PC-9 (cell line): ENCODE measurements at regions of chr3 and their contacts with region 1.

Region 1: DNA sequence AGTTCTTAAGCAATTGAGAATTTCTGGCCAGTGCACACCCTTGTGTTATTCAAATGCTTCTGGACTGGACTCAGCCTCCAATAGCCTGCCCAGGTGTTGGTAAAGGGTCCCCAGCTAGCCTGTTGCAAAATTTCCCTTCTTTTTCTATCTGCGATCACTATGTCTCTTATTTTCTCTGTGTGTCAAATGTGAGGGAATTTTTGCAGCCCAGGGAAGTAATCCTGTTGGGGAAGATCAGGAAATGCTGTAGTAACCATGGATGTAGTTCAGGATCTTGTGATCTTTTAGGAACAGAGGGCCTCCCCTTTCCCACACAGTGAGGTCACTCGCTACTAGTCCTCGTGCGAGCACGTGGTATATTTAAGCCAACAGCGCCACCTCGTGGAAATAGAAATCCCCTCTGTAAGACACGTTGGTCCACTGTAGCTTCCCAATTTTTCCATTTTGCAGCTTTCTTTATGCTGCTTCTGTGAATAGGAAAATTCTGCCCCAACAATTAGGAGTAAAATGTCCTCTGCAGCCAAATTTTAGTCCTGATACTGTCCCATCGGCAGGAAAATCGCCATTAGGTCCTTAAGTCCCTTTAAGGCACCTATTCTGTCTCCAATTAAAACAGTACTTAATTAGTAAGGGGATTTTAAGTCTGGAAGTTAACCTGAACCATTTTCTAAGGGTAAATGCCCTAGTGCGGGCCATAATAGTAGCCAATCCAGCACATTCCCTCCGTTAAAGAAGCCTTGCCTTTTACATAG is 4.0 kb upstream of the SMCO1 start:
- DNase-seq: peak; percentile 70 to 75
- H3K4me3 ChIP-seq: no peak overlapping the region
- H3K27ac ChIP-seq: no peak overlapping the region
- H3K4me1 ChIP-seq: peaks cover 8% of the 10 kb centered on the region
- H3K27me3 ChIP-seq: no peaks in the 10 kb centered on the region
- CTCF ChIP-seq: peak; percentile 97

Region 2: GRCh38 chr3:195863121-195864006 is 655.8 kb before region 1 on chr3:
- CTCF ChIA-PET with region 1: no interaction called
- POLR2A ChIA-PET with region 1: no interaction called
- intact Hi-C with region 1: loop called (anchors 2 kb)
- DNase-seq: peak; percentile 78 to 95
- H3K4me3 ChIP-seq: no peak overlapping the region
- H3K27ac ChIP-seq: peak overlapping the region; percentile 23; the same call in 1 of the 2 replicates
- H3K4me1 ChIP-seq: peaks cover 18% of the 10 kb centered on the region
- H3K27me3 ChIP-seq: no peaks in the 10 kb centered on the region
- CTCF ChIP-seq: peak; percentile 95

Region 3: DNA sequence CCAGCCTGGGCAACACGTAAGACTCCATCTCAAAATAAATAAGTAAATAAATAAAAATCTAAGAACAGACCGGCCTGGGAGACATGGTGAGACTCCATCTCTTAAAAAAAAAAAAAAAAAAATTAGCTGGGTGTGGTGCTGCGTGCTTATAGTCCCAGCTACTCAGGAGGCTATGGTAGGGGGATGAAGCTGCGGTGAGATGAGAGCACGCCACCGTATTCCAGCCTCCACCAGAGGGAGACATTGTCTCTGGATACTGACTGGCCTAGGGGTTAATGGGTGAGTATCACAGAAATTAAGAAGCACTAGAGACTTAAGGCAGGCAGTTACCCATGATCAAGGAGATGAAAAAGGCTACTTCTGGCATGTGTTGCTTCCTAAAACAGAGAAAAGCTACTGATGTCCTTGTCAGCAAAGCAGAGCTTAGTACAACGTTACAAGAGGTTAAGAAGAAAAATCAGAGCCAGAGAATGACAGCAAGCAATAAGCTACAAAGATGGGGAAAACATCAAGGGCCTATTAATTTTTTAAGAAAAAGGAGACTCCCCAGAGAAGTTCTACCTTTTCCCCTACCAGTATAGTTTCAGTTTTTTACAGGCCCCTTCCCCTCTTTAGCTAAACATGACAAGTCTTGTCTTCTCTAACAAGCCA is 445.8 kb before region 1 on chr3:
- CTCF ChIA-PET with region 1: no interaction called
- POLR2A ChIA-PET with region 1: no interaction called
- intact Hi-C with region 1: loop called (anchors 2 kb)
- DNase-seq: peak in 1 of 2 experiments; percentile 68
- H3K4me3 ChIP-seq: no peak overlapping the region
- H3K27ac ChIP-seq: peak overlapping the region; percentile 10; the same call in 1 of the 2 replicates
- H3K4me1 ChIP-seq: no peaks in the 10 kb centered on the region; the same call in 1 of the 2 replicates
- H3K27me3 ChIP-seq: no peaks in the 10 kb centered on the region
- CTCF ChIP-seq: peak; percentile 96

Region 4: GRCh38 chr3:196251918-196252317 is 267.2 kb before region 1 on chr3:
- CTCF ChIA-PET with region 1: interaction called, 7 read pairs
- POLR2A ChIA-PET with region 1: no interaction called
- intact Hi-C with region 1: loop called (anchors 1 kb)
- DNase-seq: no peak
- H3K4me3 ChIP-seq: no peak overlapping the region
- H3K27ac ChIP-seq: no peak overlapping the region
- H3K4me1 ChIP-seq: no peaks in the 10 kb centered on the region
- H3K27me3 ChIP-seq: no peaks in the 10 kb centered on the region
- CTCF ChIP-seq: no peak

Region 5: GRCh38 chr3:196388956-196389355 is 130.2 kb before region 1 on chr3:
- CTCF ChIA-PET with region 1: no interaction called
- POLR2A ChIA-PET with region 1: no interaction called
- intact Hi-C with region 1: no loop called
- DNase-seq: no peak
- H3K4me3 ChIP-seq: no peak overlapping the region
- H3K27ac ChIP-seq: no peak overlapping the region
- H3K4me1 ChIP-seq: no peaks in the 10 kb centered on the region
- H3K27me3 ChIP-seq: no peaks in the 10 kb centered on the region
- CTCF ChIP-seq: no peak

Region 6: GRCh38 chr3:196486263-196486662 is 32.9 kb before region 1 on chr3:
- CTCF ChIA-PET with region 1: interaction called, 5 read pairs
- POLR2A ChIA-PET with region 1: interaction called, 19 read pairs
- intact Hi-C with region 1: no loop called
- DNase-seq: no peak
- H3K4me3 ChIP-seq: no peak overlapping the region
- H3K27ac ChIP-seq: no peak overlapping the region
- H3K4me1 ChIP-seq: 0 out of 2 replicates have a peak, but pooled peaks cover 6% of the 10 kb centered on the region
- H3K27me3 ChIP-seq: no peaks in the 10 kb centered on the region
- CTCF ChIP-seq: peak; percentile 57; the same call in 1 of the 2 replicates

Region 7: DNA sequence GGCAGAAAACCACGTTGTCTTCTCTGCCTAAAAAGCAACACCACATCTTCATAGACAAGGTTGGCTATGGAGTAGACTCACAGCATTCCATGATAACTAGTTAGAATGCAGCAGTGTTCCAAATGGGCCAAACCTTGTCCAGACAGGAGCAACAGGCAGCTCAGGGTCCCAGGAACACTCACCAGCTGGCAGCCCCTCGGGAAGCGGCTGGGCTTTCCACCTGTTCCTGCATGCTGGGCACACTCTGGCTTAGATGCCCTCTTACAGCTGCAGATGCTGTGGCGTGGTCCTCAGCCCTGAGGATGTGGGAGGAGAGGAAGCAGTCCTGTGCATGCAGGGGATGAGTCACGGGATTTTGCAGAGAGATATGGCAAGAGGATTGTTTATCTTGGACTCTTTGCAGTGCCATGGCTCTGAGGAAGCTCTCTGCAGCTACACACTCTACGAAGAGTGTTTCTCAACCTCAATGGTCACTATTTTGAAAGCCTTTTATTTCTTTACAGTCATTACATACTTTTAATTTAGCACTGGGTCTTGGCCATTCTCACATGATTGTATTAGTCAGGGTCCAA is 131.7 kb after region 1 on chr3:
- CTCF ChIA-PET with region 1: no interaction called
- POLR2A ChIA-PET with region 1: no interaction called
- intact Hi-C with region 1: no loop called
- DNase-seq: peak; percentile 74 to 95
- H3K4me3 ChIP-seq: no peak overlapping the region
- H3K27ac ChIP-seq: peak overlapping the region; percentile 70
- H3K4me1 ChIP-seq: peaks cover 25% of the 10 kb centered on the region
- H3K27me3 ChIP-seq: no peaks in the 10 kb centered on the region
- CTCF ChIP-seq: no peak